Ascending aorta (tissue), 2 donors: ENCODE measurements at regions of chr12 and their contacts with region 1.

Region 1: GRCh38 chr12:131132118-131132892 is 178.6 kb downstream of the ADGRD1 start:
- DNase-seq: peak in 1 of 2 donors; percentile 66
- H3K4me3 ChIP-seq: no peak overlapping the region
- H3K27ac ChIP-seq: no peak overlapping the region
- H3K4me1 ChIP-seq: peaks cover 0 to 5% of the 10 kb centered on the region in 2 donors
- H3K27me3 ChIP-seq: no peaks in the 10 kb centered on the region
- CTCF ChIP-seq: peak; percentile 40 to 60 (median 59)

Region 2: GRCh38 chr12:130916251-130916911 is 215.9 kb before region 1 on chr12:
- intact Hi-C with region 1: loop called (anchors 1 kb)
- DNase-seq: peak in 1 of 2 donors; percentile 67
- H3K4me3 ChIP-seq: peak overlapping the region; percentile 22 to 40
- H3K27ac ChIP-seq: no peak overlapping the region
- H3K4me1 ChIP-seq: peaks cover 0 to 5% of the 10 kb centered on the region in 2 donors
- H3K27me3 ChIP-seq: no peaks in the 10 kb centered on the region
- CTCF ChIP-seq: peak; percentile 84 to 85 (median 84)

Region 3: DNA sequence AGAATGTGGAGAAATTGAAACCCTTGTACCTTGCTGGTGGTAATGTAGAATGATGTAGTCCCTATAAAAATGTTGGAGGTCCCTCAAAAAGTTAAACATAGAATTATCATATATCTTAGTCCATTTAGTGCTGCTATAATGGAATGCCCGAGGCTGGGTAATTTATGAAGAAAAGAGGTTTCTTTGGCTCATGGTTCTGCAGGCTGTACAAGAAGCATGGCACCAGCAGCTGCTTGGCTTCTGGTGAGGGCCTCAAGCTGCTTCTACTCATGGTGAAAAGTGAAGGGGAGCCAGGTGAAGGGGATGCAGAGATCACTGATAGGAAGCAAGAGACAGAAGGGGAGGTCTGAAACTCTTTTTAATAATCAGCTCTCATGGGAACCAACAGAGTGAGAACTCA is 55.3 kb after region 1 on chr12:
- intact Hi-C with region 1: no loop called
- DNase-seq: no peak
- H3K4me3 ChIP-seq: no peak overlapping the region
- H3K27ac ChIP-seq: no peak overlapping the region
- H3K4me1 ChIP-seq: no peaks in the 10 kb centered on the region
- H3K27me3 ChIP-seq: no peaks in the 10 kb centered on the region
- CTCF ChIP-seq: no peak